ENCODE measurements at regions of chr4 and their contacts with region 1.

Region 1: GRCh38 chr4:42627885-42628646 is 28.8 kb downstream of the ATP8A1 start:
- DNase-seq: peak; percentile 19 to 92 (median 78)
- ATAC-seq: peak; percentile 90 to 93
- H3K4me3 Mint-ChIP-seq: peak overlapping the region; percentile 68 to 88 (median 82)
- H3K27ac Mint-ChIP-seq: peak overlapping the region; percentile 94 to 100 (median 98)
- H3K4me1 Mint-ChIP-seq: peaks cover 40 to 92% (median 78%) of the 10 kb centered on the region in 4 donors
- H3K27me3 Mint-ChIP-seq: no peaks in the 10 kb centered on the region

Region 2: GRCh38 chr4:42617030-42617429 is 11.0 kb before region 1 on chr4:
- POLR2A ChIA-PET with region 1: no interaction called
- DNase-seq: no peak
- ATAC-seq: no peak
- H3K4me3 Mint-ChIP-seq: no peak overlapping the region
- H3K27ac Mint-ChIP-seq: no peak overlapping the region
- H3K4me1 Mint-ChIP-seq: peaks cover 16 to 36% (median 20%) of the 10 kb centered on the region in 4 donors
- H3K27me3 Mint-ChIP-seq: no peaks in the 10 kb centered on the region

Region 3: DNA sequence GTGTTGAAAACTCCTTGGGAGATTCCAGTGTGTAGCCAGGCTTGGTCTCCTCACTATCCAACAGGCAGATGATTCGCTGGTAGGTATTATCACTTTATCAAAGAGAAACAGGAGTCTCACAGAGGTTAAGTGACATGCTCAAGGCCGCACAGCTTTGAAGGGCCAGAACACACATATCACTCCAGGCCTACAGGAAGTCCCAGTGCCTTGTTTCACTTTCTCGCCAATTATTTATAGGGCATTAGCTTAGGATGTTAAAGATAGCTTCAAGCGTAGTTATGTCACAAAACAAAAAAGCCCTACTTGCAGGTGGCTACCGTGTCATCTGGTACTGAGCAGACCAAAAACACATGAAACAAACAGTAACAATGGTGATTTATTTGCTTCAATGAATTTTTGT is 15.6 kb after region 1 on chr4:
- POLR2A ChIA-PET with region 1: interaction called, 11 read pairs
- DNase-seq: no peak
- ATAC-seq: no peak
- H3K4me3 Mint-ChIP-seq: peak overlapping the region in 8 of 10 donors; percentile 13 to 72 (median 40)
- H3K27ac Mint-ChIP-seq: peak overlapping the region in 5 of 10 donors; percentile 10 to 81 (median 58)
- H3K4me1 Mint-ChIP-seq: peaks cover 48 to 96% (median 88%) of the 10 kb centered on the region in 4 donors
- H3K27me3 Mint-ChIP-seq: no peaks in the 10 kb centered on the region

Region 4: GRCh38 chr4:42673082-42673425 is 45.0 kb after region 1 on chr4:
- POLR2A ChIA-PET with region 1: interaction called, 12 read pairs
- DNase-seq: peak in 4 of 10 donors; percentile 3 to 31 (median 21)
- ATAC-seq: peak; percentile 28 to 49
- H3K4me3 Mint-ChIP-seq: peak overlapping the region; percentile 56 to 83 (median 76)
- H3K27ac Mint-ChIP-seq: peak overlapping the region; percentile 94 to 98 (median 96)
- H3K4me1 Mint-ChIP-seq: peaks cover 28 to 67% (median 58%) of the 10 kb centered on the region in 4 donors
- H3K27me3 Mint-ChIP-seq: no peaks in the 10 kb centered on the region

Region 5: GRCh38 chr4:42945874-42946273 is 317.8 kb after region 1 on chr4:
- POLR2A ChIA-PET with region 1: no interaction called
- DNase-seq: no peak
- ATAC-seq: no peak
- H3K4me3 Mint-ChIP-seq: no peak overlapping the region
- H3K27ac Mint-ChIP-seq: no peak overlapping the region
- H3K4me1 Mint-ChIP-seq: no peaks in the 10 kb centered on the region
- H3K27me3 Mint-ChIP-seq: peaks cover 2 to 19% (median 9%) of the 10 kb centered on the region in 5 donors